Esophagus muscularis mucosa (tissue), 4 donors: ENCODE measurements at regions of chr17 and their contacts with region 1.

Region 1: DNA sequence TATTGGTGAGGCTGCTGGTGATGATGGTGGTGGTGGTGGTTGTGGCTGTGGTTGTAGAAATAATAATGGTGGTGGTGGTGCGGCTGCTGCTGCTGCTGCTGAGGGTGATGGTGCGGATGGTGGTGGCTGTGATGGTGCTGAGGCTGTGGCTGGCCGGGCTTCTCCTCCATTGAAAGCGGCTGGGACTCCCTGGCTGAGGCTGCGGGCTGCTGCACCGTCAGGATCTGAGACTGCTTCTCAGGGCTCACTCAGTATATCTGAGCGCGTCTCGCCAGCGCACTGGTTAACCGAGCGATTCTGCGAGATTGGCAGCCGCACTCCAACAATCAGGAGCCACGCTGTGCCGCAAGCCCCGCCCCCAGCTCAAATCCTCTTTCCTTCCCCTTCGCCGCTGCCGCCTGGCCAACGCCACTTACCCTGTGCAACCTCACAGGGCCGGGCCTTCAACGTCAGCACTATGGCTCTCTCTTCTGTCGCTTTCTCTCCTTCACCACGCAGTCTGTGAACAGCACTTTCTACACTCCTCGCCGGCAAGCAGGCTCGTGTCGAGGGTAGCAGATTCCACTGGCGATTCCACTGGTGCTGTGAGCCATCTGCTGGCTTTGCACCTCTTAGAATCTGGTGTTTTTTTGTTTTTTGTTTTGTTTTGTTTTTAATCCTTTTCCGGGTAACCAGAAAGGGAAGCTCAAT is at the start of gene NUFIP2:
- DNase-seq: peak; percentile 100
- H3K4me3 ChIP-seq: peak within 1 kb of the TSS; percentile 91 to 100 (median 96)
- H3K27ac ChIP-seq: peak within 1 kb of the TSS; percentile 97 to 100 (median 99)
- H3K4me1 ChIP-seq: peaks cover 26 to 38% (median 35%) of the 10 kb centered on the region in 4 donors
- H3K27me3 ChIP-seq: no peaks in the 10 kb centered on the region
- CTCF ChIP-seq: peak in 2 of 3 experiments; percentile 23 to 31
- EP300 ChIP-seq: no peak
- POLR2A ChIP-seq: peak; percentile 99
- total RNA-seq, gene NUFIP2: 27.6 to 37.6 (median 30.5) TPM

Region 2: DNA sequence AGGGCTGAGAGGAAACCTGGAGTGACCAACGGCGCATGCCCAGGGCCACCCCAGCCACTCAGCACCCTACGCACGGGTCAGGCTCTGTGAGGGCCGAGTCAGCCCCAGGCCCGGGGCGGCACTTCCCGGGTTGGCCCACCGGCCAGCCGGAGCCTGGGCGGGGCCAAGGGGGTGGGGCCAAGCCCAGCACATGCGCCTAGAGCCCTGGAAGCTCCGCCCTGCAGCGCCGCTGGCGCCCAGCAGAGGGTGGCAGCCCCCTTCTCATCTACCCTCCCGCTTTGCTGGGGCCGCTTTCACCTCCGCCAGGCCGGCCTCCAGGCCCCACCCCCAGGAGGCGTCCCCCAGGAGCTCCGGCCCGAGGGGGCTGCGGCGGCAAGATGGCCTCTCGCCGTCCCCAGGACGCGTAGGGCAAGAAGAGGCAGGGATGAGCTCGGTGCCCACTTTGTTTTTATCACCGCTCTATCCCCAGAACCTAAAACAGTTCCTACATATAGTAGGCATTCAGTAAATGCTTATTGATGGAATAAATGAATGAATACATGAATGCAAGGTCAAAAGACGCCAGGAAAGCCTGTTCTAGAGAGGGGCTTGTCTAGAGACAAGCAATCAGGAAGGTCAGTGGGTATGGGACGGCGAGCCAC is 145.1 kb before region 1 on chr17:
- intact Hi-C with region 1: loop called (anchors 2 kb)
- DNase-seq: peak; percentile 98
- H3K4me3 ChIP-seq: peak overlapping the region; percentile 57 to 63 (median 58)
- H3K27ac ChIP-seq: peak overlapping the region; percentile 80 to 87 (median 80)
- H3K4me1 ChIP-seq: peaks cover 32 to 57% (median 47%) of the 10 kb centered on the region in 4 donors
- H3K27me3 ChIP-seq: no peaks in the 10 kb centered on the region
- CTCF ChIP-seq: peak; percentile 97 to 99 (median 98)
- EP300 ChIP-seq: no peak
- POLR2A ChIP-seq: no peak

Region 3: GRCh38 chr17:29219378-29220047 is 74.5 kb before region 1 on chr17:
- intact Hi-C with region 1: loop called (anchors 5 kb)
- DNase-seq: no peak
- H3K4me3 ChIP-seq: no peak overlapping the region
- H3K27ac ChIP-seq: no peak overlapping the region
- H3K4me1 ChIP-seq: peaks cover 0 to 9% (median 8%) of the 10 kb centered on the region in 4 donors
- H3K27me3 ChIP-seq: no peaks in the 10 kb centered on the region
- CTCF ChIP-seq: peak in 2 of 3 experiments; percentile 93 to 95
- EP300 ChIP-seq: no peak
- POLR2A ChIP-seq: no peak

Region 4: DNA sequence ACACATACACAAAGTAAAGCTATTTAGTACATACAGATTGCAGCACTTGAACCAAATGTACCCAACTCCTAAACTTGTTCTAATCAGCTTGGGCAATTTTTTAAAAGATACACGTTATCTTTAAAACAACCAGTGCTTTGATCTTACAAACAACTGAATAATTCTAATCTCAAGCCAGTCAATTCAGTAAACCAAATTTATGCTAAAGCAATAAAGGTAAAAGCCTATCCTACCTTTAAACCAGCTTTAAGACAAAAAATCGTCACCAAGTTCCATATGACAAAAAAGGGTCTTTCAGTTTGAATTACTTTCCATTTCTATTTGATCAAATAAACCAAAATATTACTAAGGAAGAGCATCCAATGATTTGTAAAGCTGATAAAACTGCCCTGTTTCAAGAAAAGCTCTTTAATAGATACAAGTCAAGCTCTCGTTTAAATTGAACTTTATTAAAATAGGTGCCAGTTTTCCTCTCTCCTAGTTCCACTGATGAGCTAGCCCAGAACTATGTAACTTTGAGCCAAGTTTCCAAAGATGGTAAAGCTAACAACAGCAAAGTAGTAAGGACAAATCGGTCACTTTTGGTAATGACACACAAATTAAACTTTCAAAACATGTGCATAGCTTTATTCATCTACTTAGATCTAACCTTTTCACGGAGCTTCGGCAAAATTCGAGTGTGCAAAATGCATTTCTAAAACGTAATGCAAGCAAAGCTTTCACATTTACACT is 37.1 kb before region 1 on chr17:
- intact Hi-C with region 1: loop called (anchors 5 kb)
- DNase-seq: no peak
- H3K4me3 ChIP-seq: peak overlapping the region; percentile 3 to 37 (median 30)
- H3K27ac ChIP-seq: peak overlapping the region; percentile 64 to 77 (median 72)
- H3K4me1 ChIP-seq: peaks cover 44 to 71% (median 63%) of the 10 kb centered on the region in 4 donors
- H3K27me3 ChIP-seq: no peaks in the 10 kb centered on the region
- CTCF ChIP-seq: no peak
- EP300 ChIP-seq: no peak
- POLR2A ChIP-seq: no peak

Region 5: GRCh38 chr17:29347831-29348629 is 54.0 kb after region 1 on chr17:
- intact Hi-C with region 1: no loop called
- DNase-seq: no peak
- H3K4me3 ChIP-seq: no peak overlapping the region
- H3K27ac ChIP-seq: no peak overlapping the region
- H3K4me1 ChIP-seq: no peaks in the 10 kb centered on the region
- H3K27me3 ChIP-seq: no peaks in the 10 kb centered on the region
- CTCF ChIP-seq: no peak
- EP300 ChIP-seq: no peak
- POLR2A ChIP-seq: no peak

Region 6: GRCh38 chr17:29461483-29462206 is 167.6 kb after region 1 on chr17:
- intact Hi-C with region 1: no loop called
- DNase-seq: no peak
- H3K4me3 ChIP-seq: no peak overlapping the region
- H3K27ac ChIP-seq: no peak overlapping the region
- H3K4me1 ChIP-seq: peaks cover 25 to 44% (median 33%) of the 10 kb centered on the region in 4 donors
- H3K27me3 ChIP-seq: no peaks in the 10 kb centered on the region
- CTCF ChIP-seq: no peak
- EP300 ChIP-seq: no peak
- POLR2A ChIP-seq: no peak